Activated CD4-positive, alpha-beta memory T cell treated with anti-CD3 and anti-CD28 coated beads for 36 hours (primary cell): ENCODE measurements at regions of chr5 and their contacts with region 1.

Region 1: DNA sequence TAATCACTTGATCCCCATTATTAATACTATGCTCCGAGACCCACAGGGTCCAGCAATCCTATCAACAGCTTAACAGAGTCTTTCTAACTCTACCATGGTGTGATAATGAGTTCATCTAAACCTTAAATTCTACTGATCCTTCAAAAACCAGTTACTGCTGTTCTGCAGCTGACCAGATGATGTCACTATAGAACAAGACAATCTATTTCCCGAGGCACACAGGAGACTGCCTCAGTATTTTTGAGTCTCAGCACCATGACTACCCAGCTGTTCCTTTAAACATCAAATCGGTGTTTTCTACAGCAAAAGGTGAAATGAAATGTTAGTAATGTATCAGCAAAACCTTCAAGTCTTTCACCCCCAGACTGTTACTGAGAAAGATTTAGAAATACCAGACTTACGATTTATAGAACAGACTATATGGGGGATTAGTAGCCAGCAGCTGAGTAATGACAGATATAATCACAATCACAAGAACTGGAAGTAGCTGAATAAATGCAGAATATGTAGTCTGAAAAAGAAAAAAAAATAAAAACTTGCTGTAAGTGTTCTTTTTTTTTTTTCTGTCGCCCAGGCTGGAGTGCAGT is 16.9 kb downstream of the DNAJC18 start:
- DNase-seq: peak; percentile 50
- H3K4me3 Mint-ChIP-seq: no peak overlapping the region
- H3K27ac Mint-ChIP-seq: peak overlapping the region; percentile 83
- H3K4me1 Mint-ChIP-seq: peaks cover 10% of the 10 kb centered on the region
- H3K27me3 Mint-ChIP-seq: no peaks in the 10 kb centered on the region

Region 2: DNA sequence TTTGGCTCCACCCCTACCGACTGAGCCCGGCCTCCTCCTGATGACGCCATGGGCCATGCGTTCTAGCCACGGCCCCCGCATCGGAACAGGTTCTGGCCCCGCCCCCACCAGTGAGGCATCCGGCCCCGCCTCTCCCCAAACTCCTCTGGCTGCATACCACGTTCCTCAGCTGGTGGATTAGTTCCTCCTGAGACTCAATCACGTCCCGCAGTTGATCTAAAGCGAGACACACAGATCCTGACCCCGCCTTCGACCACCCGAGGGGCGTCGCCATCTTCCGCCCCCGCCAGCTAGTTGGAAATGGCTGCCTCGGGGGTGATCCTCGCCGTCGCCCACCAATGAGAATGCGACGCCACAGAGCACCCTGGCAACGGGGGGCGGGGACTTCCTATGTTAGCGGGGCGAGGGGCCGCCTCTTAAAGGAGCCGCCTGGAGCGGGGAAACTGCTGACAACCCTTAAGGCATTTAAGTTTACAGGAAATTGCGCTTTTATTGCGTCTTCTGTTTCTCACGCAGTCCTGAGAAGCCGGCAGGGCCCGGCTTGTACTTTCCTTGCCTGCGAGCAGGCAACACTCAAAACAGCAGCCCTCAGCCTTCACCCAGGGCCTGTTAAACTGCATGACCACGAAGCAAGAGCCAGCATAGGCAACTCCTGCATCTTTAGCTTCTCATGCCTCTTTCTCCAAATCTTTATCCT is 18.5 kb before region 1 on chr5 and contains the start of gene SPATA24:
- CTCF ChIA-PET with region 1: interaction called, 16 read pairs
- POLR2A ChIA-PET with region 1: no interaction called
- intact Hi-C with region 1: no loop called
- DNase-seq: peak; percentile 100
- H3K4me3 Mint-ChIP-seq: peak within 1 kb of the TSS; percentile 91
- H3K27ac Mint-ChIP-seq: peak within 1 kb of the TSS; percentile 99
- H3K4me1 Mint-ChIP-seq: peaks cover 34% of the 10 kb centered on the region
- H3K27me3 Mint-ChIP-seq: no peaks in the 10 kb centered on the region
- total RNA-seq, gene SPATA24: 3.7 to 5.2 TPM

Region 3: DNA sequence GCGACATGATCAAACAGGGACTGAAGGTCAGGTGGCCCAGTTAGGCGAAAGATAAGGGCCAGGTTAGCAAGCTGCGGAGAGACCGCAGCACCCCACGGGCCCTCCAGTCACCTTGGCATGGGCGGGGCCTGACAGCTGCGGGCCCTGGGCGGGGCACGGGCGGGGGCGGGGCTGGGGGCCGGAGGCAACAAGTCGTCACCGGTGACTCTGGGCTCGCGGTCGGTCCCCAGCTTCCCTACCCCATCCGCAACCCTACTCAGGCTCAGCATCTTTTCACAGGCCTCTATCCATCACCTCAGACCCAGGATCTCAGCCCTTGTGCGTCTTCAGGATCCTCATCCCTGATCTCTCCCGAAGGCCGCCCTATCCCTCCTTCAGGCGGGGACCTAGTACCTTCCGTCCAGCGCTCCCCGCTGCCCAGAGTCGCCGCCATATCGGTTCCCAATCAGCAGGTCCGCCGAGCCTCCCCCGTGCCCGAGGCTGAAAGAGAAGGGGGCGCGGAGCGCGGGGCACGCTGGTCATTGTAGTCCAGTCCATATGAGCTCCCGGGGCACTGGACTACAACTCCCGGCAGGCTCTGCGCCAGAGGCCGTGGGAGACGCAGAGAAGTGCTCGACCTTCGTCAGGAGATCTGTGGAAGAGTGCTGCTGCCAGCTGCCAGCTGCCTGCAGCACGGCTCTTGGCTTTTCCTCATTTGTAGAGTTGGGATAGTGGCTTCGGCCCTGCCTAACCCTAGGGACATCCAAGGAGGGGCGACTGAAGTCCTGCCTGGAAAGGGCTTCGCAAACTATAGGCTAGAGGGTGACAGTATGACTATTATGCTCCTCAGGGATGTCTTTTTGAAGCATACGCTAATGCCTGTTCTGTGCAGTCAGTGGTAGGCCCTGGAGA is 16.9 kb after region 1 on chr5 and contains the start of gene DNAJC18:
- CTCF ChIA-PET with region 1: interaction called, 46 read pairs
- POLR2A ChIA-PET with region 1: interaction called, 27 read pairs
- intact Hi-C with region 1: no loop called
- DNase-seq: peak; percentile 96
- H3K4me3 Mint-ChIP-seq: peak within 1 kb of the TSS; percentile 98
- H3K27ac Mint-ChIP-seq: peak within 1 kb of the TSS; percentile 99
- H3K4me1 Mint-ChIP-seq: peaks cover 62% of the 10 kb centered on the region
- H3K27me3 Mint-ChIP-seq: no peaks in the 10 kb centered on the region
- total RNA-seq, gene DNAJC18: 54.1 to 56.0 TPM

Region 4: GRCh38 chr5:139458580-139459406 is 36.4 kb after region 1 on chr5:
- CTCF ChIA-PET with region 1: interaction called, 10 read pairs
- POLR2A ChIA-PET with region 1: interaction called, 4 read pairs
- intact Hi-C with region 1: loop called (anchors 1 kb)
- DNase-seq: peak; percentile 90
- H3K4me3 Mint-ChIP-seq: peak overlapping the region; percentile 56
- H3K27ac Mint-ChIP-seq: peak overlapping the region; percentile 97
- H3K4me1 Mint-ChIP-seq: peaks cover 65% of the 10 kb centered on the region
- H3K27me3 Mint-ChIP-seq: no peaks in the 10 kb centered on the region

Region 5: GRCh38 chr5:139474890-139475791 is 52.7 kb after region 1 on chr5:
- CTCF ChIA-PET with region 1: interaction called, 40 read pairs
- POLR2A ChIA-PET with region 1: interaction called, 50 read pairs
- intact Hi-C with region 1: loop called (anchors 2 kb)
- DNase-seq: peak; percentile 55
- H3K4me3 Mint-ChIP-seq: peak overlapping the region; percentile 20
- H3K27ac Mint-ChIP-seq: peak overlapping the region; percentile 93
- H3K4me1 Mint-ChIP-seq: peaks cover 89% of the 10 kb centered on the region
- H3K27me3 Mint-ChIP-seq: no peaks in the 10 kb centered on the region

Region 6: DNA sequence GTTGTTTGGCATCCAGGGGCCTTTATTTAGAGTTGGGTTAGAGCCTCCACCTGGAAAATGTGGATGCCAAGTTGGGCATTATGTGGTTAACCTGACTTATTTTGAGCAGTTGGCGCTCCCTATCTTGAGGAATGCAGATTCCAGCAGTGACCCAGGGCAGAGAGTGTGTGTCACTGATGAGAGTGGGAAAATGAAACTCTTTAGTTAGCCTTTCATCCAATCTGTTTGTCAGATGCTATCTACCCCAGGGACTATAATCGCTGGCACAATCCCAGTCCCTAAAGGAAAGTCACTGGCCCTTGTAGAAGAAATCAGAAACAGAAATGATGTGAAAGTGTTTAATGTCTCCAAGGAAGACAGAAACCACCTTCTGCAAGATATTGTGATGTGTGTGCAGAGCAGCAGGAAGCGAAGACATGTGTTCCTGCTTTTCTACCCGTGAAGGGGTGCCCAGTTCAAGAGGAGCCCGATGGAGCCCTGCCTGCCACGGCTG is 70.3 kb after region 1 on chr5:
- CTCF ChIA-PET with region 1: interaction called, 29 read pairs
- POLR2A ChIA-PET with region 1: no interaction called
- intact Hi-C with region 1: no loop called
- DNase-seq: no peak
- H3K4me3 Mint-ChIP-seq: no peak overlapping the region
- H3K27ac Mint-ChIP-seq: no peak overlapping the region
- H3K4me1 Mint-ChIP-seq: peaks cover 35% of the 10 kb centered on the region
- H3K27me3 Mint-ChIP-seq: no peaks in the 10 kb centered on the region